ENCODE measurements at regions of chr3 and their contacts with region 1.

Region 1: GRCh38 chr3:38346587-38347410 is at the start of gene XYLB:
- DNase-seq: peak; percentile 87
- ATAC-seq: peak; percentile 99
- H3K4me3 Mint-ChIP-seq: peak within 1 kb of the TSS; percentile 64
- H3K27ac Mint-ChIP-seq: peak within 1 kb of the TSS; percentile 58
- H3K4me1 Mint-ChIP-seq: peaks cover 14% of the 10 kb centered on the region
- H3K27me3 Mint-ChIP-seq: peaks cover 8% of the 10 kb centered on the region
- total RNA-seq, gene XYLB: 5.2 to 6.9 TPM

Region 2: GRCh38 chr3:37974121-37975083 is 372.4 kb before region 1 on chr3:
- CTCF ChIA-PET with region 1: interaction called, 25 read pairs
- DNase-seq: peak; percentile 82
- ATAC-seq: peak; percentile 96
- H3K4me3 Mint-ChIP-seq: no peak overlapping the region
- H3K27ac Mint-ChIP-seq: no peak overlapping the region
- H3K4me1 Mint-ChIP-seq: peaks cover 9% of the 10 kb centered on the region
- H3K27me3 Mint-ChIP-seq: peaks cover 2% of the 10 kb centered on the region

Region 3: GRCh38 chr3:38136777-38137614 is 209.8 kb before region 1 on chr3 and contains the start of gene ACAA1:
- CTCF ChIA-PET with region 1: interaction called, 12 read pairs
- DNase-seq: peak; percentile 100
- ATAC-seq: peak; percentile 88
- H3K4me3 Mint-ChIP-seq: peak within 1 kb of the TSS; percentile 84
- H3K27ac Mint-ChIP-seq: peak within 1 kb of the TSS; percentile 96
- H3K4me1 Mint-ChIP-seq: peaks cover 63% of the 10 kb centered on the region
- H3K27me3 Mint-ChIP-seq: no peaks in the 10 kb centered on the region
- total RNA-seq, gene ACAA1: 91.3 to 91.7 TPM

Region 4: GRCh38 chr3:38421679-38422336 is 75.0 kb after region 1 on chr3:
- CTCF ChIA-PET with region 1: interaction called, 12 read pairs
- DNase-seq: no peak
- ATAC-seq: no peak
- H3K4me3 Mint-ChIP-seq: no peak overlapping the region
- H3K27ac Mint-ChIP-seq: no peak overlapping the region
- H3K4me1 Mint-ChIP-seq: peaks cover 16% of the 10 kb centered on the region
- H3K27me3 Mint-ChIP-seq: no peaks in the 10 kb centered on the region

Region 5: GRCh38 chr3:38479431-38480092 is 132.8 kb after region 1 on chr3:
- CTCF ChIA-PET with region 1: interaction called, 78 read pairs
- DNase-seq: peak; percentile 60
- ATAC-seq: peak; percentile 75
- H3K4me3 Mint-ChIP-seq: no peak overlapping the region
- H3K27ac Mint-ChIP-seq: no peak overlapping the region
- H3K4me1 Mint-ChIP-seq: no peaks in the 10 kb centered on the region
- H3K27me3 Mint-ChIP-seq: no peaks in the 10 kb centered on the region

Measured in activated CD8-positive, alpha-beta memory T cell treated with anti-CD3 and anti-CD28 coated beads, Interleukin-2, amount 10 ng/mL, durations not matched to agents 7 days and 5 days (primary cell).